ENCODE measurements at regions of chr1 and their contacts with region 1.

Region 1: GRCh38 chr1:200143347-200143746 is 115.8 kb downstream of the NR5A2 start:
- DNase-seq: no peak
- H3K27ac ChIP-seq: no peak overlapping the region
- CTCF ChIP-seq: no peak

Region 2: GRCh38 chr1:200182701-200183100 is 39.4 kb after region 1 on chr1:
- CTCF ChIA-PET with region 1: interaction called, 13 read pairs
- POLR2A ChIA-PET with region 1: no interaction called
- DNase-seq: no peak
- H3K27ac ChIP-seq: no peak overlapping the region
- CTCF ChIP-seq: no peak

Measured in RWPE1 (cell line).